Esophagus muscularis mucosa (tissue), 4 donors: ENCODE measurements at regions of chr19 and their contacts with region 1.

Region 1: DNA sequence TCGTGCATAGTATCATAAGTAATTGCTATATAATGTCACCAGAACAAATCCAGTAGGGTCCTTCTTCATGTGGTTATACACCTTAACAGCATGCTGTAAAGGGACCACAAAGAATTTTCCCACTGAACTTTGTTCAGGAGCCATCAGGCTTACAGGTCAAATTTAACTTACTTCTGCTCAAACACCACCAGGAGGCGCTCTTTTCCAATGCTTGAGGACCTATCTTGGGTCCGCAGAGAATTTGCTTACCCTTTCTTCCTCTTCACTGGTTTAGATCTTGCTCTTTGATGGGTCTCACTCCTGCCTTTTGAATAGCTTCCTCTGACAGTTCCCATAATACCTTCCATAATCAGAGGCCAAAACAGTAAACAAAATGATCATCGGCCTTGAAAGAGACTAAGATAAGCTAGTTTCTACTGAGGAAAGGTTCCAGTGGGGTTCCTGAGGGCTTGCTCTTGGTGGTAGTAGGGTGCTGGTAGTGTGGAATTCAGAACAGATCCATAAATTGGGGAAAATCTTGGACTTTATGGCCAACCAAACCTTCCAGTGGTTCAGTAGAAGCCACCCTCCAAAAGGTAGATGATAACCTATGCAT is 37.4 kb downstream of the SCGB2B2 start:
- DNase-seq: no peak
- H3K4me3 ChIP-seq: no peak overlapping the region
- H3K27ac ChIP-seq: no peak overlapping the region
- H3K4me1 ChIP-seq: no peaks in the 10 kb centered on the region
- H3K27me3 ChIP-seq: no peaks in the 10 kb centered on the region
- CTCF ChIP-seq: peak; percentile 68 to 80 (median 77)
- EP300 ChIP-seq: no peak
- POLR2A ChIP-seq: no peak

Region 2: GRCh38 chr19:34662919-34663318 is 23.3 kb after region 1 on chr19:
- intact Hi-C with region 1: no loop called
- DNase-seq: no peak
- H3K4me3 ChIP-seq: no peak overlapping the region
- H3K27ac ChIP-seq: no peak overlapping the region
- H3K4me1 ChIP-seq: peaks cover 0 to 8% (median 6%) of the 10 kb centered on the region in 4 donors
- H3K27me3 ChIP-seq: no peaks in the 10 kb centered on the region
- CTCF ChIP-seq: peak in 1 of 3 experiments; percentile 12
- EP300 ChIP-seq: no peak
- POLR2A ChIP-seq: no peak

Region 3: DNA sequence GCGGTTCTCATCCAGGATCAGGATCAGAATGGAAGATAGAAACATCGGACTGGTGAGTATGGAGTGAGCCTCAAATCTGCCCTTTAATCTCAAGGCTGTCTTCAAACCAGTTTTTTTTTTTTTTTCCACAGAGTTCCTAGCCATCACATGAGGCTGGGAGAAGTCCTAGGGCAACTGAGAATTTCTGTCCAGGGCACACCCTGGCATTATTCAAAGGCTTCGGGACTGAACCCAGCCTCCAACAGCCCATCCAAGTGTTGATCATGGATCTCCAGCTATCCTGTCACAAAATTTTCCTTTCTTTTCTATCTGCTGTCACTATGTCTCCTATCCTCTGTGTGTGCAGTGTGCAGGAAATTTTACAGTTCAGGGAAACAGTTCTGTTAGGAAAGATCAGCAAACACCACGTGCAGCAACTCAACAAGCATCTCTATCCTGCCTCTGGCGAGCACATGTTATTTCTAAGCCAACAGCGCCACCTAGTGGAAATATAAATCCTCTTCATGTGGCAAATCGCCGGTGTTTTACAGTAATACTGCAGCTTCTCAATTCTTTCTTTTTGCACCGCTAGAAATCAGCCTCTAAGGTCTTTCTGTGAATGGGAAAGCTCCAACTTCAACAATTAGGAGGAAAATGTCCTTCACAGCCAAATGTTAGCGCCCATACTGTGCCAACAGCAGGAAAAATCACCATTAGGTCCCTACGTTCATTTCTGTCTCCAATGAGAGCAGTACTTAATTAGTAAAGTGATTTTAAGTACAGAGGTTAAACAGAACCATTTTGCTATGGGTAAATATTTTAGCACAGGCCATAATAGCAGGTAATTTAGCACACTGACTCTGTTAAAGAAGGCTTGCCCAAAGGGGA is 73.0 kb after region 1 on chr19:
- intact Hi-C with region 1: loop called (anchors 1 kb)
- DNase-seq: no peak
- H3K4me3 ChIP-seq: no peak overlapping the region
- H3K27ac ChIP-seq: no peak overlapping the region
- H3K4me1 ChIP-seq: peaks cover 0 to 6% (median 0%) of the 10 kb centered on the region in 4 donors
- H3K27me3 ChIP-seq: peaks cover 0 to 5% (median 0%) of the 10 kb centered on the region in 4 donors
- CTCF ChIP-seq: peak; percentile 78 to 87 (median 83)
- EP300 ChIP-seq: no peak
- POLR2A ChIP-seq: no peak